ENCODE measurements at regions of chr7 and their contacts with region 1.

Region 1: DNA sequence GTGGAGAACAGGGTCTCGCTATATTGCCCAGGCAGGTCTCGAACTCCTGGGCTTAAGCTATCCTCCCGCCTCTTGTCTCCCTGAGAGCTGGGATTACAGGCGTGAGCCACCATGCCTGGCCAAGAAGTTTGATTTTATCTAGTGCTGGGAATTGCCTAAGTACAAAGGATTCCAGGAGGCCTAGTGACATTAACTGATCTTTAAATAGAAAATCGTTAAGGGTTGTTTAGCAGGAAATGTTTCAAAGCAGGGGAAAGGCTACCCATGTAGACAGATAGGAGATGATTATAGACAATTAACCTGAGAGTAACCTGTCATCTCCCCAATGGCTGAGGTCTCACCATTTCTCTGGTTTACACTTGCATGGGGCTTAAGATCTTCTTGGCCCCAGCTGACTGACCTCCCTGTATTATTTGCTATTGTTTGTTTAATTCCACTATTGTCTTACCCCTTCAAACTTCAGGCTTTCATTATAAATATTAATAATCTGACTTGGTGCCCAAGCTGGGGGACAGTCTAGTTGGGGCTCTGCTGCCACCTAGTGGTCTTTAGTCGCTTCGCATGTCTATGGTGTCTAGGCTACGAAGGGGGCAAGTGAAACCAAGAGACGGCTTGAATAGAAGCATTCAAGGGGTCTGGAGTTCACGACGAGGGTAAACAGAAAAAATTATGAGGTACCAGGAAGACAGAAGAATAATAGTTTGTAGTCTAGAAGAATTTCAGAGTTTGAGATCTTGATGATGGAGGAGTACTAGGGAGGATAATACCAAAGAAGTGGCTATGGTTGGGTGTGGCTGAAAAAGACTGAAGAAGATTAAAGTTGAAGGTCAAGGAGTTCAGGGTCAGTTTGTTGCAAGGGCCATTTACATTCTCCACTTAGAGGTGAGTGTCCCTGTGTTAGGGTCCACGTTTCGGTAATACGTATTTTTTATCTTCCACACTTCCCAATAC is 40.4 kb upstream of the BPGM start:
- DNase-seq: peak; percentile 42 to 65
- ATAC-seq: peak; percentile 88 to 95 (median 92)
- H3K4me3 ChIP-seq: no peak overlapping the region
- H3K27ac ChIP-seq: peak overlapping the region in 3 of 10 donors; percentile 31 to 42 (median 36)
- H3K4me1 ChIP-seq: peaks cover 0 to 17% (median 0%) of the 10 kb centered on the region in 9 donors
- H3K27me3 ChIP-seq: peaks cover 0 to 5% (median 0%) of the 10 kb centered on the region in 7 donors
- CTCF ChIP-seq: peak; percentile 91 to 96 (median 94)

Region 2: GRCh38 chr7:134174797-134175261 is 431.4 kb before region 1 on chr7:
- intact Hi-C with region 1: no loop called
- DNase-seq: no peak
- ATAC-seq: peak in 3 of 8 donors; percentile 48 to 79 (median 56)
- H3K4me3 ChIP-seq: no peak overlapping the region
- H3K27ac ChIP-seq: peak overlapping the region in 1 of 10 donors; percentile 5
- H3K4me1 ChIP-seq: peaks cover 0 to 17% (median 0%) of the 10 kb centered on the region in 9 donors
- H3K27me3 ChIP-seq: no peaks in the 10 kb centered on the region
- CTCF ChIP-seq: no peak

Region 3: GRCh38 chr7:134432296-134433152 is 173.7 kb before region 1 on chr7:
- intact Hi-C with region 1: loop called (anchors 1 to 5 kb)
- DNase-seq: peak; percentile 82 to 87
- ATAC-seq: peak; percentile 97 to 99 (median 98)
- H3K4me3 ChIP-seq: peak overlapping the region in 9 of 10 donors; percentile 20 to 59 (median 45)
- H3K27ac ChIP-seq: peak overlapping the region; percentile 11 to 87 (median 80)
- H3K4me1 ChIP-seq: peaks cover 0 to 17% (median 6%) of the 10 kb centered on the region in 9 donors
- H3K27me3 ChIP-seq: no peaks in the 10 kb centered on the region
- CTCF ChIP-seq: peak; percentile 29 to 88 (median 79)

Region 4: DNA sequence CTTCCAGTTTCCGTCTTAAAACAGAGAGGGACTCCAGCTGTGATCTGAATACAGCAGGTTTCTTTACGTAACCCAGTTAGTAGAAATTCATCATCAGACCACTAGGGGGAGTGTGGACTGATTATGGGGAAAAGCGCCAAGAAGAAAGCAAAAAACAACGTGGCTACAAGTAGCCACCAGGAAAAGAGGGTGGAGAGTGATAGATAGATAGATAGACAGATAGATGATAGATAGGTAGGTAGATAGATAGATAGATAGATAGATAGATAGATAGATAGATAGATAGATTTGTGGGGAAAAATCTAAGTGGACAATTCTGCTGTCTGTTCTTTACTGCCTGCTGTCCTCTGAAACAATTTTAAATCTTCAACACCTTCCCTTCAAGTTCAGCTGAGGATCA is 91.6 kb before region 1 on chr7:
- intact Hi-C with region 1: loop called in 7 of 10 experiments (anchors 1 to 5 kb)
- DNase-seq: peak in 1 of 2 donors; percentile 41
- ATAC-seq: peak in 6 of 8 donors; percentile 23 to 71 (median 62)
- H3K4me3 ChIP-seq: no peak overlapping the region
- H3K27ac ChIP-seq: no peak overlapping the region
- H3K4me1 ChIP-seq: peaks cover 0 to 18% (median 4%) of the 10 kb centered on the region in 9 donors
- H3K27me3 ChIP-seq: peaks cover 0 to 9% (median 0%) of the 10 kb centered on the region in 7 donors
- CTCF ChIP-seq: peak; percentile 66 to 84 (median 78)

Region 5: GRCh38 chr7:134520130-134520529 is 86.1 kb before region 1 on chr7:
- intact Hi-C with region 1: loop called in 6 of 10 experiments (anchors 2 to 5 kb)
- DNase-seq: no peak
- ATAC-seq: no peak
- H3K4me3 ChIP-seq: no peak overlapping the region
- H3K27ac ChIP-seq: no peak overlapping the region
- H3K4me1 ChIP-seq: peaks cover 0 to 9% (median 0%) of the 10 kb centered on the region in 9 donors
- H3K27me3 ChIP-seq: peaks cover 0 to 9% (median 0%) of the 10 kb centered on the region in 7 donors
- CTCF ChIP-seq: peak in 6 of 9 donors; percentile 16 to 35 (median 23)

Region 6: DNA sequence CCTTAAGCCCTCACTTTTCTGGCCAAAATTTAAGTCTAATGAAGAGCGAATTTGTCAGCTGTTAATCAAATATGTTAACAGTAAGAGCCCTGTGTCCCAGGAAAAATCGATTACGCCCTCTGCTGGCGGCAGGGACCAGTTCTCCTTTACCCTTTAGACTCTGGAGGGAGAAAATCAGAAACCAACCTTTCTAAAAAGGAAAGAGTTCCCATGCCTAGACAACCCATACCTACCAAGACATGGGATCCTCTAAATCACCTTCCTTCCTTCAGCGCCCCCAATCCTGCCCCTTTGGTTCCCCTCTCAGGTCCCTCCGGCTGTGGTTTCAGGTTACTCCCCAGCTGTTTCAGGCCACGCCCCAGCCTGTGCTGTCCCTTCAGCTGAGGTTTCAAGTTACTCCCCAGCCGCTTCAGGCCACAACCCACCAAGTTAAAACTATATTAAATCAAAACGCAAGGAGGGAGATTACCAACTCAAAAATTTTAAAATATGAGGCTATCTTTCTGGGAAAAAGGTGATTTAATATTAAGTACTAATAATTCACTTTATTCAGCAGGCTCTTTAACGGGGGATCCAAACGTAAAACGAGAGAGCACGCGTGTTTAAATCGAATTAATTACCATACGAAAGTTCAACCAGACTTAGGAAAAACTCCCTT is 58.7 kb before region 1 on chr7:
- intact Hi-C with region 1: loop called in 5 of 10 experiments (anchors 2 to 10 kb)
- DNase-seq: peak; percentile 72 to 73
- ATAC-seq: peak; percentile 90 to 96 (median 94)
- H3K4me3 ChIP-seq: peak overlapping the region in 9 of 10 donors; percentile 16 to 49 (median 42)
- H3K27ac ChIP-seq: peak overlapping the region in 4 of 10 donors; percentile 2 to 60 (median 6)
- H3K4me1 ChIP-seq: peaks cover 0 to 12% (median 0%) of the 10 kb centered on the region in 9 donors
- H3K27me3 ChIP-seq: peaks cover 0 to 9% (median 0%) of the 10 kb centered on the region in 7 donors
- CTCF ChIP-seq: peak; percentile 59 to 91 (median 87)

Measured in heart right ventricle (tissue), 16 donors.